AG04450 (cell line): ENCODE measurements at regions of chr7 and their contacts with region 1.

Region 1: DNA sequence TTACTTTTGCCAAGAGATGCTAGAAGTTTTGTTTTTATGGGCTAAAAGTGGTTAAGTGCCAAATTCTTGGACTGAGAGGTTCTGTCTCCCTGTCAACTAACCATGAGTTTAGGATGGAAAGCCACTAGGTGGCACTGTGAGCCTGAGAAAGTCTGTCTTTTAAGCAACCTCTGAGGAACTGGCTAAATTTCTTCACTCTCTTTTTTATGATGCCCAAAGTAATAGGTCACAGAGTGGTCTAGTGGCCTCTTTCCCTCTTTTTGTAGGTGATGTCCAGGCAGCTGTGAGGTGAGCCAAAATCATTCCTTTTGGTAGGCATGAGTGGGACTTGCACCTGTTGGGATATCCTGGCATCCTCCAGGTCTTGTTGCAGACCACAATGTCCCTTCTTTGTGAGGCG is 56.8 kb downstream of the SND1 start:
- DNase-seq: peak; percentile 68
- H3K4me3 ChIP-seq: no peak overlapping the region
- H3K27ac ChIP-seq: no peak overlapping the region
- H3K27me3 ChIP-seq: no peaks in the 10 kb centered on the region
- CTCF ChIP-seq: peak; percentile 76

Region 2: DNA sequence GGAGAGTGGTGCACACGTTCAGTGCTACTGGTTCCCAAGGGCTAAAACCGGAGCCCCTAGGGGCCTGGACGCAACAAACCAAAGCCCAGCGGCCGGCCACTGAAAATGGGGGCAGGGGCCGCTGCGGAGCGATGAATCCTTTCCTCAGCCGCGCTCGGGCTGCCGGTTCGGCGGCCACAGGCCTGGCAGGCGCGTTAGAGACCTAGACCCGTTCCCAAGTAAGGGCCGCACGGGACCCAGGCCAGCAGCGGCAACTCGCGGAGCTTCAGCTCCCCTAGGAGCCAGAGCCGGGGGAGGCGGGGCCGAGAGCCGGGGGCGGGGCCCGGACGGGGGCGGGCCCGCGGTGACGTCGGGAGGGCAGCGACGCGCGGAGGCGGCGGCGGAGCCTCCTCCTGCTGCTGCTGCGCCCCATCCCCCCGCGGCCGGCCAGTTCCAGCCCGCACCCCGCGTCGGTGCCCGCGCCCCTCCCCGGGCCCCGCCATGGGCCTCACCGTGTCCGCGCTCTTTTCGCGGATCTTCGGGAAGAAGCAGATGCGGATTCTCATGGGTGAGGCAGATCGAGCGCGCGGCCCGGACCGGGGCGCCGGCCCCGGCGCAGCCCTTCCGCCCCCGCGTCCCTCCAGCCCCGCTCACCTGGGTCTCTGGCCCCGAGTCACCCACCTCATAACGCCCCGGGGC is 120.6 kb before region 1 on chr7 and contains the start of gene ARF5:
- CTCF ChIA-PET with region 1: interaction called, 14 read pairs
- POLR2A ChIA-PET with region 1: interaction called, 12 read pairs
- DNase-seq: peak; percentile 33
- H3K4me3 ChIP-seq: peak within 1 kb of the TSS; percentile 92
- H3K27ac ChIP-seq: peak within 1 kb of the TSS; percentile 61
- H3K27me3 ChIP-seq: no peaks in the 10 kb centered on the region
- CTCF ChIP-seq: no peak
- polyA plus RNA-seq, gene ARF5: 174 and 179 TPM in 2 replicates

Region 3: DNA sequence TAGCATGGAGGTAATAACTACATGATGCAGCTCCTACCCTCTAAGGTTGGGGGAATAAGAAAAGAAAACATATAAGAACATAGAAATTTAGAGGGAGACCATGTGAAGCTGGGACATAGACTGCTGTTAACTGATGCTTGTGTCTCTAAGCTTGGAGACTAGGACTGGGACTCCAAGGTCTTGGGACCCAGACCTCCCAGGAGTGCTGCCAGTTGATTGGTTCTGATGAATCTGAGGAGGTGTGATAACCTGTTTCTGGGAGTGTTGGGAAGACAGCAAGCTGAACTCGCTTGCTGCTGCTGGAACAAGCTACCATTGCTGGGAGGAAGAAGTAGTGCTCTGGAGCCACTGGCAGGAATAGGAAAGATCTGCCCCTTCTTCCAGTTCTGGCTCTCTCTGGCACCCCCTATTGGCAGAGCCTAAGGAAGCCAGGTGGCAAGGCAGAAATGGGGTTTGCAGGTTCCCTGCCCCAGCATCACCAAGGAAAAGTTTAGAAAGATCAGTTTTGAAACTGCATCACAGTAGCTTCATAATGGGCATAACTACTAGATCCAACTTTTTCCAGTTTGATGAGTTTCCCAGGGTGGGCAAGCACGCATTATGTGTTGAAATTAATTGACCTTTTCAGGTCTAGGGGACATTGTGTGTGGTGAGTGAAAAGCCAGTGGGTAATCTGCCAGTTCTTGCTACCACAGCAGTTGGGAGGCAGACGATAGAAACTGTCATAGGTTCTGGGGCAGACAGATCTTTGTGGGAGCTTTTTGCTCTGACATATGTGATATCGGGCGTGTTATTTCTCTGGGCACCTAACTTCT is 83.9 kb after region 1 on chr7:
- CTCF ChIA-PET with region 1: interaction called, 10 read pairs
- POLR2A ChIA-PET with region 1: no interaction called
- DNase-seq: no peak
- H3K4me3 ChIP-seq: no peak overlapping the region
- H3K27ac ChIP-seq: no peak overlapping the region
- H3K27me3 ChIP-seq: no peaks in the 10 kb centered on the region
- CTCF ChIP-seq: peak; percentile 41; the same call in 1 of the 2 replicates

Region 4: DNA sequence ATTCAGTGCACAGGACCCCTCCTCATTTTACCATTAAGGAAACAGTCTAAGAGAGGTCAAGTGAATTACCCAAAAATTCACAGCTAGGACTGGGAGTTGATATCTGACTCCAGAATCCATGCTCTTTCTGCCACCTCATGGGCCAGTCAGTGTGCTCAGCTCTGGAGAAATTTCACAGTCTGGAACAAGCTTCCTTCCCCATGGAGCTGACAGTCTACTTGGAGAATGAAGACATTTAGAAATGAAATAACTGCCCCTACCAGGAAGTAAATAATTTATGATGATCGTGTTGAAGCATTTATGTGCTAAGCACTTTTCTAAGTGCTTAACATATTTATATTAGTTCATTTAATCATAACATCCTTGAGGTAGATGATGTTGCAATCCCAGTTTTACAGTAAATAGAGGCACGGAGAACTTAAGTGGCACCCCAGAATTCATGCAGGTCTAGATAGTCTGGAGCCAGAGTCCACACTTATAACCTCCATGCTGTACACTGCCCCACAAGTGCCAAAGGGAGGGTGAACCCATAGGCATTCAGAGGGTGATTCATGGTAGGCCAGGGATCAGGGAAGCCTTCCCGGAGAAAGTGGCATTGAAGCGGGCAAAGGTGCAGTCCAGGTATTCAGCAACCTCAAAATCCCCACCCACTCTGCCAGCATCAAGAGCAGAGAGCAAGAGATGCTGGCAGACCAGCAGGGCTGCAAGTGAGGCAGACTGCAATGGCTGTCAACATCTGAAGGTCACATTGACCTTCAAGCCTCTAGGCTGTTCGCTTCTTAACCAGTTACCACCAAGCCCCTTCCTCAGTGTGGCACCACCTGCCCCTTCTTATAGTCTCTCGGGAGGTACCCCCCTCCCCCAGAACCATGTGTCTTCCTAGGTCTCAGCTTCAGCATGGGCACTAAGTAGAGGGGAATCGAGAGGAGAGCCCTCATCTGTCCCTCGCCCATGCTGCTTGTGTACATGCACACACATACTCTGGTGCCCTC is 360.9 kb after region 1 on chr7:
- CTCF ChIA-PET with region 1: interaction called, 11 read pairs
- POLR2A ChIA-PET with region 1: no interaction called
- DNase-seq: no peak
- H3K4me3 ChIP-seq: no peak overlapping the region
- H3K27ac ChIP-seq: no peak overlapping the region
- H3K27me3 ChIP-seq: no peaks in the 10 kb centered on the region
- CTCF ChIP-seq: no peak

Region 5: DNA sequence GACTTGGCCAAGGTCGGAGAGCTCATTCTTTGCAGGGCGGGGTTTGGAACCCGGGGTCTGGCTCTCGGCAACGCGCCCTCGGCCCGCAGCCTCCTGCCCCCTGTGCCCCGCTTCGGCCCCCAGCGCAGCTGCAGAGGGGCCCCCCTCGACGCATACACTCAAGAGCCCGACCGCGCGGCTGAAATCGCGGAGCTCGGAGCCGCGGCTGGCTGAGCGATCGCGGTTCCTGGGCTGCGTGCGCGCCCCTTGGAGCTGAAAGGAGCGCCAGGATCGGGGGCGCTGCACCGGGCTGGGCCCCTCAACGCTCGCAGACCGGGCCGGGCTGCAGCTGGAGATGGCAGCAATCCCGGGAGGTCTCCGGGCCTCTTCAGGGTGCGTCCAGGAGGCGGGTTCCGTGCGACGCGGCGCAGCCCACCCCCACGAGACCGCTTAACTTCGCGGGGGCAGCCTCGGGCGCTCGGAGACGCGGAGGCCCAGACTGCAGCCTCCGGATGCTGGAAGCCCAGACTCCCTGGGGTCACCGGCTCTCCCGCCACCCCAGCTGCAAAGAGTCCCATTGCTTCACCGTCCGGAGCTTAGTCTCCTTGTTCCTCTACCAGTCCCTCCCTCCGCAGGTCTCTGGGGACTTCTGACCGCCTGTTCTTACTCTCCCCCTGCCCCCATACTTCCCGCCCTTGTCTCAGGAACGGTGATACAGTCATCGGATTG is 395.4 kb after region 1 on chr7:
- CTCF ChIA-PET with region 1: interaction called, 15 read pairs
- POLR2A ChIA-PET with region 1: no interaction called
- DNase-seq: no peak
- H3K4me3 ChIP-seq: peak overlapping the region; percentile 50
- H3K27ac ChIP-seq: no peak overlapping the region
- H3K27me3 ChIP-seq: peaks cover 26% of the 10 kb centered on the region
- CTCF ChIP-seq: no peak

Region 6: DNA sequence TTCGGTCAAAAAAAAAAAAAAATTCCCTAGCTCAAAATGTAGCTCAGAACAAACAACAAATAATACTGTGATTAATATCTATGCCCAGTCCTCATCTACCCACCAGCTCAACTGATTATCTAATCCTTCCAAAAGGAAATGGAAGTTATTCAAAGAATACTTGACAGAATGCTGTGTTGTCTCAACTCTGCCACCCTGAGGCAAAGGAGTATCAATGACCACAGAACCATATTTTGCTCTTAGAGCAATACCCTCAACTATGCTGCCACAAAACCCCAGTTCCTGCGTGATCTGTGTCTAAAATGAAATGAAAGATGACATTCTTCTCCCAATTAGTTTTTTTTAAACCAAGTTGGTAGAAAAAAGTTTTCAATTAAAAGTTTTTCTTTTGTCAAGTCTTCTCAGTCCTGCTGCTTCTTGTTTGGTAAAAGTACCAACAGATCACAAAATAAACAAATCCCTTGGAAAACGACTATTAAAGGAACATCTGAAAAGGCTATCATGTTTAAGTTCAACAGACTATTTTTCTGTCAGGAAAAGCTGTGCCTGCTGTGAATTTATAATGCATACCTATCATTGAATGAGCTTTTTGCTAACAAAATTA is 613.4 kb after region 1 on chr7:
- CTCF ChIA-PET with region 1: interaction called, 12 read pairs
- POLR2A ChIA-PET with region 1: no interaction called
- DNase-seq: no peak
- H3K4me3 ChIP-seq: no peak overlapping the region
- H3K27ac ChIP-seq: no peak overlapping the region
- H3K27me3 ChIP-seq: no peaks in the 10 kb centered on the region
- CTCF ChIP-seq: peak; percentile 51